A549 (cell line): ENCODE measurements at regions of chr2 and their contacts with region 1.

Region 1: GRCh38 chr2:173021939-173022371 is 53.7 kb upstream of the MAP3K20 start:
- DNase-seq: peak; percentile 35 to 78
- ATAC-seq: peak; percentile 82 to 91; a peak in 4 of 6 replicates
- H3K4me3 ChIP-seq: no peak overlapping the region
- H3K27ac ChIP-seq: peak overlapping the region; percentile 38 to 67; a peak in 5 of 6 replicates
- H3K4me1 ChIP-seq: peaks cover 11% of the 10 kb centered on the region
- CTCF ChIP-seq: peak; percentile 81
- EP300 ChIP-seq: no peak
- POLR2A ChIP-seq: no peak
- RAD21 ChIP-seq: peak; percentile 74 to 86

Region 2: DNA sequence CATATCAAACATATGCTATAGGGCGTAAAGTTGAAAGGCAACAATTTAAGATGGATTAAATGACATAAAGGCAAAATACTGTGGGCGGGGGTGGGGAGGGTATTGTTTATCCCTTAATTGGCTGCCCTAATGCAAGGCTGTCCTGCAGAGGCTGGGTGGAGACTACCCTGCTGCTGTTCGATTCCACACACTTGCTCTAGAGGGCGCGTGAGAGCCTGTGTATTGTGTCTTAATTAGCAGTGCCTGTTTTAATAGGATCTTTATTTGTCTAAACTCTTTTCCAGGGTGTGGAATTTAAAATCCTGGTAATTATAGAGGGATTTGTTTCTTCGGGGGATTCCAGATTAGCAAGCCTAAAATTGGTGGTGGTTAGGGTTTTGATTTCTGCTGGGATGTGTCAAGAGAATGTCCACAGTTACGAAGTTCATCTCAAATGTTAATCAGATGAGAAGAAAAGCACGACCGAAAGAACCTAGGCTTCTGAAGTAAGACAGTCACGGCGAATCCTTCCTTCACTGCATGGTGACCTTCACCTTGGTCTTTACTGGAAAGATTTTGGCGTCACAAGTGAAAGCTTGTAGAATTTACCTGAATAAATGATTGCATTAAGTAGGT is 49.8 kb before region 1 on chr2:
- CTCF ChIA-PET with region 1: interaction called, 31 read pairs
- POLR2A ChIA-PET with region 1: no interaction called
- DNase-seq: peak; percentile 52 to 53
- ATAC-seq: peak; percentile 70 to 86; a peak in 4 of 6 replicates
- H3K4me3 ChIP-seq: no peak overlapping the region
- H3K27ac ChIP-seq: no peak overlapping the region
- H3K4me1 ChIP-seq: peaks cover 21% of the 10 kb centered on the region
- CTCF ChIP-seq: peak; percentile 77
- EP300 ChIP-seq: no peak
- POLR2A ChIP-seq: no peak
- RAD21 ChIP-seq: peak; percentile 61 to 68

Region 3: GRCh38 chr2:172977270-172978062 is 44.5 kb before region 1 on chr2:
- CTCF ChIA-PET with region 1: interaction called, 31 read pairs
- POLR2A ChIA-PET with region 1: no interaction called
- DNase-seq: peak; percentile 23 to 63
- ATAC-seq: peak; percentile 93 to 94
- H3K4me3 ChIP-seq: no peak overlapping the region
- H3K27ac ChIP-seq: peak overlapping the region; percentile 53 to 67
- H3K4me1 ChIP-seq: peaks cover 18% of the 10 kb centered on the region
- CTCF ChIP-seq: peak; percentile 81
- EP300 ChIP-seq: no peak
- POLR2A ChIP-seq: no peak
- RAD21 ChIP-seq: peak; percentile 83 to 93

Region 4: GRCh38 chr2:173145454-173145853 is 123.5 kb after region 1 on chr2:
- CTCF ChIA-PET with region 1: no interaction called
- POLR2A ChIA-PET with region 1: no interaction called
- DNase-seq: no peak
- ATAC-seq: no peak
- H3K4me3 ChIP-seq: no peak overlapping the region
- H3K27ac ChIP-seq: no peak overlapping the region
- H3K4me1 ChIP-seq: peaks cover 30% of the 10 kb centered on the region
- CTCF ChIP-seq: no peak
- EP300 ChIP-seq: no peak
- POLR2A ChIP-seq: no peak
- RAD21 ChIP-seq: no peak